Colonic mucosa (tissue), 4 donors: ENCODE measurements at regions of chr2 and their contacts with region 1.

Region 1: DNA sequence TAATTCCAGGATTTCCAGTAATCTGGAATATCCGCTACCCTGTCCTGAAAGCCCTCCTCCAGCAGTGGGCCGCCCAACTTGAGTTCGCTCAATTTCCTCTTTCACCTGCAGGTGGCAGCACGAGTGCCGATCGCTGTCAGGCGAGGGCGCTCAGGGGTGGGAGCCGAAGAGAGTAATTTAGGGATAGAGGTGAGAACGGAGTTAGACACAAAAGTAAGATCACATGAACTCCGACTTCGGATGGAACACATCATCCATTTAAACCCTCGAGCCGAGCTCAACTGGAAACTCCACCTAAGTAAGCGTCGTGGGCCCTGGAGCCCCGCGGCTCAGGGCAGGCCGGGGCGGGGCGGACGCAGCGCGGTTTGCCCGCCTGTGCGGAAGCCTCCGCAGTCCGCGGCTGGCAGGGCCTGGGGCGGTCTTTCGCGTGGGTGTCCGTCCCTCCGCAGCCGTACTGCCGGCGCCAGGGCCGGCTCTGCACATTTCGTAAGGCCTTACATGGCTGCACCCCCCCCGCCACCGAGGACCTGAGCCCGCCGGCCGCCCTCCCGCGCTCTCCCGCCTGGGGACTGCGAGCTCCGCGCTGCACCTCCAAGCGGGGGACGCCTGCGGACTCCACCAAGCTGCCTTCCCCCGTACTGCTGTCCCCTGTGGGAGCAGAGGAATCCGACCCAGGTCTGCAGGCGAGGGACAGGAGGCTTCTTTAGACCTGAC is 61.2 kb downstream of the SEMA4F start:
- DNase-seq: peak; percentile 91
- H3K4me3 ChIP-seq: peak overlapping the region; percentile 61
- H3K27ac ChIP-seq: peak overlapping the region; percentile 84
- H3K4me1 ChIP-seq: no peaks in the 10 kb centered on the region
- H3K27me3 ChIP-seq: no peaks in the 10 kb centered on the region
- CTCF ChIP-seq: peak; percentile 90

Region 2: GRCh38 chr2:74833418-74834233 is 118.4 kb after region 1 on chr2 and contains the start of gene HK2:
- intact Hi-C with region 1: loop called (anchors 10 kb)
- DNase-seq: peak; percentile 91
- H3K4me3 ChIP-seq: peak within 1 kb of the TSS; percentile 77
- H3K27ac ChIP-seq: peak within 1 kb of the TSS; percentile 80
- H3K4me1 ChIP-seq: no peaks in the 10 kb centered on the region
- H3K27me3 ChIP-seq: no peaks in the 10 kb centered on the region
- CTCF ChIP-seq: no peak
- total RNA-seq, gene HK2: 162 to 396 TPM

Region 3: DNA sequence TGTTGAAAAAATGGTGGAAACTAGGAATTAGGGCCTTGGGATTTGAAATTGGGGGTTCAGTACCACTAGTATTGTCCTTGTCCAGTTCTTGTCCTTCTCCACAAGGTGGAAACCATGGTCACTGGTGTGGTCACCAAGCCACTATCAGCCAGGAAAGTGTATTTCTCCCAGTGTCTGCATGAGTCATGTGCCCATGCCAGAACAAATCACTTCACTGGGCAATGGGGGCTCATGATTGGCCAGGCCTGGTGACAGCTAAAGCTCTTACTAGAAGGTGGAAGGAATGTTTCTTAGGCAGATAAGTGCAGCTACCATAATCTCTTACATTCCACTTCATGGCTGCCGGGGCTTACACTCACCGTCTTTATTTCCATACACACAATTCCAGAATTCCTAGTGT is 608.9 kb after region 1 on chr2:
- intact Hi-C with region 1: no loop called
- DNase-seq: no peak
- H3K4me3 ChIP-seq: no peak overlapping the region
- H3K27ac ChIP-seq: no peak overlapping the region
- H3K4me1 ChIP-seq: no peaks in the 10 kb centered on the region
- H3K27me3 ChIP-seq: no peaks in the 10 kb centered on the region
- CTCF ChIP-seq: no peak